Dorsolateral prefrontal cortex (tissue), 120 donors: ENCODE measurements at regions of chr5 and their contacts with region 1.

Region 1: GRCh38 chr5:140244525-140245025 is 58.3 kb downstream of the PFDN1 start:
- DNase-seq: peak; percentile 89 to 95 (median 94)
- H3K4me3 ChIP-seq: peak overlapping the region in 23 of 59 donors; percentile 1 to 42 (median 24)
- H3K27ac ChIP-seq: peak overlapping the region in 58 of 59 donors; percentile 5 to 90 (median 78)
- H3K27me3 ChIP-seq: no peaks in the 10 kb centered on the region
- CTCF ChIP-seq: peak; percentile 60 to 99 (median 94)

Region 2: DNA sequence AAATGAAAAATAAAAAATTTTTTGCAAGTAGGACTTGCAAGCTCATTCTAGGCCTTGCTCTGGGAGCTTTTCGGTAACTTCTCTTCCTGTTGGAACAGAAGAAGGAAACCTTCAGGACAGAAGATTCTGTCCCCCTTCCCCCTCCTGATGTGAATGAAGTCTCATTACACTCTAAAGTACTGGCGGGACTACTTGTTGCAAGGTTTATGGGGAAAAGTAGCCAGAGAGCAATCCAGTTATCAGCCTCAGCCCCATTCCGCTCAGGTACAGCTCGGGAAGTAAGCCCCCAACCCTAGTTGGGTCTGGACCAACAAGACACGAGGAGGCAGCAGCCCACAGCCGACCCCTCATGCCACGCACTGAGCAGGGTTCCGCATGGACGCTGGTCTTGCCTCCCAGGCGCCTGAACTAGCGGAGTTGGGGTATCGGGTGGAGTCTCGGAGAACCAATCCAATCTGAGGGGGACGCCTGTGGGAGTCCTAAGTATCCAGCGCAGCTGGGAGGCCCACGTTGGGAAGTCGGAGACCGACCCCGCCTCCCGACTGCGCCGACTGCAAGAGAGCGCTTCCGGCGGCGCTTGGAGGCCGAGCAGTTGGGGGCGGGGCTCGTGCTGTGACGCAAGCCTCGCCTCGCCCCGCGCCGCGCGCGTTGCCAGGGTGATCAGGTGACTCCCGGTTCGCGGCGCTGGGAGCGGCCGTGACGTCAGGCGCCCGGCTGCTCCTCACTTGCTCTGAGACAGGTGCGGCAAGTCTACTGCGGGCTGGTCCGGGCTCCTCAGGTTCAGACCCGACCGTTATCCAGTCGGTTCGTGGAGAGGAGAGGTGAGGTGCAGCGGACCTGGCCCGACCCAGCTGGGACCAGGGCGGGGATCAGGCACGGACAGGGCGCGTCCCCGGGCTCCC is 69.9 kb before region 1 on chr5 and contains the start of gene CYSTM1:
- intact Hi-C with region 1: loop called in 1 of 2 experiments (anchors 5 kb)
- DNase-seq: peak; percentile 87 to 95 (median 93)
- H3K4me3 ChIP-seq: peak within 1 kb of the TSS; percentile 74 to 100 (median 97)
- H3K27ac ChIP-seq: peak within 1 kb of the TSS; percentile 63 to 100 (median 96)
- H3K27me3 ChIP-seq: no peaks in the 10 kb centered on the region
- CTCF ChIP-seq: peak in 27 of 56 donors; percentile 11 to 57 (median 24)
- total RNA-seq, gene CYSTM1: 28.2 to 110 (median 55.2) TPM

Region 3: GRCh38 chr5:140322751-140323731 is 78.5 kb after region 1 on chr5:
- intact Hi-C with region 1: no loop called
- DNase-seq: peak in 8 of 10 donors; percentile 25 to 71 (median 54)
- H3K4me3 ChIP-seq: peak overlapping the region in 1 of 59 donors; percentile 27
- H3K27ac ChIP-seq: peak overlapping the region in 58 of 59 donors; percentile 6 to 87 (median 74)
- H3K27me3 ChIP-seq: no peaks in the 10 kb centered on the region
- CTCF ChIP-seq: no peak

Region 4: DNA sequence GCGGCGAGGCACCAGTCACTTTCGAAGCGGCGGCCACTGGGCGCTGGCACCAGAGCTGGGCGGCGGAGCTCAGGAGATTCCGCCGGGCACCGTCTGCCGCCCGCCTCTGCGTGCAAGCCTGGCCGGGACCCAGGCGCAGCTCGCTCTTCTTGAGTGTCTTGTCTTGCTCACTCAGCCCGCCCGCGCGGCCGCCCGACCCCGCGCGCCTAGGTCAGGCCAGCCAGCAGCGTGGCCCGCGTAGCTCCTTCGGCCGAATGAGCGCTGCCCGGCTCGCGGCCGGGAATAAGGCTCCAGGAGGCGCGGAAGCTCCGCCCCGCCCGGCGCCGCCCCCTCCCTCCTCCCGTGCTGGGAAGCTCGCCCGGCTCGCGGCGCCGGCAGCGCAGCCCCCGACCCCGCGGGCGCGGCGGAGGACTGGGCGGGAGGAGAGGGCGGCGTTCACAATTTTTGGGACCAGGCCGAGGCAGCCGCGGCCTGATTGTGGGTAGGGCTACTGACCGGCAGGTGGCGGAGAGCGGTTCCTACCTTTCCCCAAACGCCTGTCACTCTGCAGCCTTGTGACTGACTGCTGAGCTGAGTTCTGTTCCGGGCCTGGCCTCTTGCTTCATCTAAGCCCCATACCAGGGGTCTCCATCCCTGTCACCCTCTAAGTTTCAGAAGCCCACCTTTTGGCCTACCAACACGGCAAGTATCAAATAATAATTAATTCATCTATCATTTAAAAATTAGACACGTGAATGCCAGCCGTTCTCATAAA is 102.0 kb after region 1 on chr5 and contains the start of gene HBEGF:
- intact Hi-C with region 1: loop called (anchors 1 to 2 kb)
- DNase-seq: peak; percentile 71 to 90 (median 82)
- H3K4me3 ChIP-seq: peak within 1 kb of the TSS; percentile 61 to 98 (median 89)
- H3K27ac ChIP-seq: peak within 1 kb of the TSS; percentile 10 to 97 (median 91)
- H3K27me3 ChIP-seq: no peaks in the 10 kb centered on the region
- CTCF ChIP-seq: peak in 46 of 56 donors; percentile 3 to 66 (median 40)
- total RNA-seq, gene HBEGF: 5.3 to 27.6 (median 9.3) TPM

Region 5: DNA sequence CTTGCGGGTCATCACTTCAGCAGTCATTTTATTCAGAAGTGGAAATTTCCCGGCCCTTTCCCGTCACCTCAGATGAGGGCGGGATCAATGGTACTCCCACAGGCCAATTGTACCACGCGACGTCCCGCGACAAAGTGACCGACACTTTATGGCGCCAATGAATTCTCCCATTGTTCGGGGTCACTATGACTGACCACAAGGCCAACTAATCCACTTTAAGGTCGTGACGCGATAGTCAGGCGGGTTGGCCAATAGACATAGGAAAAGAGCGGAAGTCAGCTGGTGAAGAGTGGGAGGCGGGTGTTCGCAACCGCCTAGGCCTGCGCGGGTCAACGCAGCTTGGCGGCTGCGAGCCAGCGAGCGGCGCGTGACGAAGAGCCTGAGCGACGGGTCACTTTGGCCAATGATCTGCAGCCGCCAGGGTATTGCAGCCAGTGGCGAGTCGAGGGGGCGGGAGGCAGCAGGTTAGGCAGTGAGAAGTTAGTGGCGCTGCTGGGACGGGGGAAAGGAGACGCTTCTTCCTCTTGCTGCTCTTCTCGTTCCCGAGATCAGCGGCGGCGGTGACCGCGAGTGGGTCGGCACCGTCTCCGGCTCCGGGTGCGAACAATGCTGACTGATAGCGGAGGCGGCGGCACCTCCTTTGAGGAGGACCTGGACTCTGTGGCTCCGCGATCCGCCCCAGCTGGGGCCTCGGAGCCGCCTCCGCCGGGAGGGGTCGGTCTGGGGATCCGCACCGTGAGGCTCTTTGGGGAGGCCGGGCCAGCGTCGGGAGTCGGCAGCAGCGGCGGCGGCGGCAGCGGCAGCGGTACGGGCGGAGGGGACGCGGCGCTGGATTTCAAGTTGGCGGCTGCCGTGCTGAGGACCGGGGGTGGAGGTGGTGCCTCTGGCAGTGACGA is 157.0 kb after region 1 on chr5 and contains the start of gene ANKHD1:
- intact Hi-C with region 1: no loop called
- DNase-seq: peak; percentile 95 to 99 (median 99)
- H3K4me3 ChIP-seq: peak within 1 kb of the TSS; percentile 69 to 100 (median 98)
- H3K27ac ChIP-seq: peak within 1 kb of the TSS; percentile 82 to 100 (median 97)
- H3K27me3 ChIP-seq: no peaks in the 10 kb centered on the region
- CTCF ChIP-seq: peak in 38 of 56 donors; percentile 6 to 59 (median 30)
- total RNA-seq, gene ANKHD1: 85.6 to 158 (median 124) TPM

Region 6: GRCh38 chr5:140547508-140548299 is 303.1 kb after region 1 on chr5 and contains the start of gene EIF4EBP3:
- intact Hi-C with region 1: loop called in 1 of 2 experiments (anchors 5 kb)
- DNase-seq: peak; percentile 93 to 98 (median 97)
- H3K4me3 ChIP-seq: peak within 1 kb of the TSS; percentile 27 to 93 (median 59)
- H3K27ac ChIP-seq: peak within 1 kb of the TSS; percentile 53 to 97 (median 89)
- H3K27me3 ChIP-seq: no peaks in the 10 kb centered on the region
- CTCF ChIP-seq: peak in 52 of 56 donors; percentile 22 to 71 (median 52)
- total RNA-seq, gene EIF4EBP3: 1.2 to 16.5 (median 5.9) TPM

Region 7: GRCh38 chr5:140710899-140711552 is 466.5 kb after region 1 on chr5:
- intact Hi-C with region 1: loop called (anchors 10 kb)
- DNase-seq: peak; percentile 24 to 87 (median 74)
- H3K4me3 ChIP-seq: peak overlapping the region; percentile 17 to 74 (median 60)
- H3K27ac ChIP-seq: peak overlapping the region in 54 of 59 donors; percentile 19 to 94 (median 82)
- H3K27me3 ChIP-seq: no peaks in the 10 kb centered on the region
- CTCF ChIP-seq: peak in 4 of 56 donors; percentile 7 to 25 (median 10)